Activated CD4-positive, alpha-beta T cell treated with anti-CD3 and anti-CD28 coated beads, Interleukin-2, amount 10 ng/mL, durations not matched to agents 24 days and 14 days (primary cell): ENCODE measurements at regions of chr15 and their contacts with region 1.

Region 1: GRCh38 chr15:74781431-74782258 is at the start of gene CSK:
- DNase-seq: peak; percentile 95
- H3K4me3 Mint-ChIP-seq: peak within 1 kb of the TSS; percentile 98
- H3K27ac Mint-ChIP-seq: peak within 1 kb of the TSS; percentile 96
- H3K4me1 Mint-ChIP-seq: peaks cover 66% of the 10 kb centered on the region
- H3K27me3 Mint-ChIP-seq: no peaks in the 10 kb centered on the region
- total RNA-seq, gene CSK: 332 and 340 TPM in 2 replicates

Region 2: GRCh38 chr15:74540761-74541493 is 240.7 kb before region 1 on chr15 and contains the start of gene ARID3B:
- intact Hi-C with region 1: loop called (anchors 2 kb)
- DNase-seq: peak; percentile 97
- H3K4me3 Mint-ChIP-seq: peak within 1 kb of the TSS; percentile 98
- H3K27ac Mint-ChIP-seq: peak within 1 kb of the TSS; percentile 95
- H3K4me1 Mint-ChIP-seq: peaks cover 44% of the 10 kb centered on the region
- H3K27me3 Mint-ChIP-seq: no peaks in the 10 kb centered on the region
- total RNA-seq, gene ARID3B: 31.1 and 33.9 TPM in 2 replicates

Region 3: GRCh38 chr15:74768771-74769342 is 12.8 kb before region 1 on chr15:
- intact Hi-C with region 1: loop called (anchors 1 kb)
- DNase-seq: peak; percentile 90
- H3K4me3 Mint-ChIP-seq: no peak overlapping the region
- H3K27ac Mint-ChIP-seq: no peak overlapping the region
- H3K4me1 Mint-ChIP-seq: peaks cover 24% of the 10 kb centered on the region
- H3K27me3 Mint-ChIP-seq: peaks cover 4% of the 10 kb centered on the region

Region 4: DNA sequence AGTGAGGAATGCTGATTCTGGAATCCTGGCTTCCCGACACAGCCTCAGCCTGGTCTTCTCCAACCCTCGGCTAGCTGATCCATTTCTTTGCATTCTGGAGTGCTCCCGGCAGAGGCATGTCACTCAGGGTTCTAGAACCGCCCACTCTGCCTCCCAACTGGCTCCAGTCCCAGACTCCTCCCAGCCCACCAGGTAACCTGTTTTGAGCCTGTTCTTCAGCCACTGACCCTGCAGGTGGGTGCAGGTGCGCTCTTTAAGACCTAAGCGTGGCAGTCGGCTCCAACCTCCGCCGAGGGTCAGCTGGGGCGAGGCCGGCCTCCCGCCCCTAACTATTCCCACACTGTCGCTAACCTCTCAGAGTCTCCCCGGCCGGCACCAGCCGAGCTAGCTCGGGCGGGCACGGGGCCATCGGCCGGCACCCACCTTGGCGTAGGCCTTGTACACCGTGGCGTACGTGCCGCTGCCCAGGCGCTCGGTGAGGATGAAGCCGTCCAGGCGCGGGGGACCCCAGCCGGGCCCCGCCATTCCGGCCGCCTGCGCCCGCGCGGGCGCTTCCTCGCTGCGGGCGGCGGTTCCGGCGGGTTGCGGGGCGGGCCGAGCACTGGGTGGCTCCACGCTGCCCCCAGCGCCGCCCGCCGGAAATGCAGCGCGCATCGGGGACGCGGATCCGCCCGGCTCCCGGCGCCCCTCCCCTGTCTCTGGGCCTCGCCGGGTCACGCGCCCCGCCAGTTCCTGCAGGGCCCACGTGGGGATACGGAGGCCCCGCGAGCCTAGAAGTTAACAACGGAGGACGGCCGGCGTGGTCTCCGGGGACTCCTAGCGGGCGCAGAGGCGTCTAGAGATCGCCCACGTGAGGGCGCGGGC is 61.2 kb after region 1 on chr15 and contains the start of gene ULK3:
- intact Hi-C with region 1: loop called (anchors 2 kb)
- DNase-seq: peak; percentile 99
- H3K4me3 Mint-ChIP-seq: peak within 1 kb of the TSS; percentile 95
- H3K27ac Mint-ChIP-seq: peak within 1 kb of the TSS; percentile 95
- H3K4me1 Mint-ChIP-seq: peaks cover 48% of the 10 kb centered on the region
- H3K27me3 Mint-ChIP-seq: no peaks in the 10 kb centered on the region
- total RNA-seq, gene ULK3: 52.6 and 57.3 TPM in 2 replicates

Region 5: GRCh38 chr15:74906446-74907162 is 125.0 kb after region 1 on chr15 and contains the start of gene FAM219B:
- intact Hi-C with region 1: no loop called
- DNase-seq: peak; percentile 95
- H3K4me3 Mint-ChIP-seq: peak within 1 kb of the TSS; percentile 97
- H3K27ac Mint-ChIP-seq: peak within 1 kb of the TSS; percentile 93
- H3K4me1 Mint-ChIP-seq: peaks cover 35% of the 10 kb centered on the region
- H3K27me3 Mint-ChIP-seq: no peaks in the 10 kb centered on the region
- total RNA-seq, gene FAM219B: 68.0 and 82.0 TPM in 2 replicates